ENCODE measurements at regions of chr1 and their contacts with region 1.

Region 1: GRCh38 chr1:205523891-205524793 is 19.7 kb downstream of the CDK18 start:
- DNase-seq: peak; percentile 77 to 88
- ATAC-seq: peak; percentile 72 to 83 (median 79)
- H3K4me3 ChIP-seq: no peak overlapping the region
- H3K27ac ChIP-seq: no peak overlapping the region
- H3K4me1 ChIP-seq: no peaks in the 10 kb centered on the region
- H3K27me3 ChIP-seq: peaks cover 0 to 10% (median 3%) of the 10 kb centered on the region in 3 donors
- CTCF ChIP-seq: peak; percentile 87

Region 2: DNA sequence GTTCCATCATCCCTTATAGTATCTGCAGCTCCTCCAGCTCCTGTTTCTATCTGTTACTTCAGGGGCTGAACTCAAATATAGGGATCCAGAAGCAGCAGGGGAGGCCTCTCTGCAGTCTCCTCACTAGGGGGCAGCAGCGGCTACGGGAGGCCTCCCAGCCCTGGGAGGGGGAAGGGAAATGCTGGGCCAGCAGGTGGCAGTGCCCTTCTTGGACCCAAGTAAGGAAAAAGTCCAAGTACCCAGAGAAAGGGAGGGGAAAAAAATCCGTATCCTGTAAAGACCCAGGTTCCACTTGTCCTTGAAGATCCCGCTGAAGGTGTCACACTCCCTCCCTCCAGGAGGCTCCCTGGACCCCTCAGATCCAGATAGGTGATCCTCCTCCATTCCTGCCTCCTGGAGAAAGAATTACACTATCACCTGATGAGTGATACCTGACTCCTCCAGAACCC is 188.5 kb before region 1 on chr1:
- intact Hi-C with region 1: loop called in 1 of 2 experiments (anchors 5 kb)
- DNase-seq: peak; percentile 63 to 86
- ATAC-seq: peak; percentile 72 to 87 (median 85)
- H3K4me3 ChIP-seq: no peak overlapping the region
- H3K27ac ChIP-seq: no peak overlapping the region
- H3K4me1 ChIP-seq: peaks cover 20% of the 10 kb centered on the region
- H3K27me3 ChIP-seq: no peaks in the 10 kb centered on the region
- CTCF ChIP-seq: peak; percentile 81

Region 3: GRCh38 chr1:205346956-205347576 is 177.1 kb before region 1 on chr1:
- intact Hi-C with region 1: loop called in 1 of 2 experiments (anchors 5 kb)
- DNase-seq: no peak
- ATAC-seq: no peak
- H3K4me3 ChIP-seq: no peak overlapping the region
- H3K27ac ChIP-seq: no peak overlapping the region
- H3K4me1 ChIP-seq: peaks cover 9% of the 10 kb centered on the region
- H3K27me3 ChIP-seq: peaks cover 0 to 46% (median 14%) of the 10 kb centered on the region in 3 donors
- CTCF ChIP-seq: no peak

Region 4: DNA sequence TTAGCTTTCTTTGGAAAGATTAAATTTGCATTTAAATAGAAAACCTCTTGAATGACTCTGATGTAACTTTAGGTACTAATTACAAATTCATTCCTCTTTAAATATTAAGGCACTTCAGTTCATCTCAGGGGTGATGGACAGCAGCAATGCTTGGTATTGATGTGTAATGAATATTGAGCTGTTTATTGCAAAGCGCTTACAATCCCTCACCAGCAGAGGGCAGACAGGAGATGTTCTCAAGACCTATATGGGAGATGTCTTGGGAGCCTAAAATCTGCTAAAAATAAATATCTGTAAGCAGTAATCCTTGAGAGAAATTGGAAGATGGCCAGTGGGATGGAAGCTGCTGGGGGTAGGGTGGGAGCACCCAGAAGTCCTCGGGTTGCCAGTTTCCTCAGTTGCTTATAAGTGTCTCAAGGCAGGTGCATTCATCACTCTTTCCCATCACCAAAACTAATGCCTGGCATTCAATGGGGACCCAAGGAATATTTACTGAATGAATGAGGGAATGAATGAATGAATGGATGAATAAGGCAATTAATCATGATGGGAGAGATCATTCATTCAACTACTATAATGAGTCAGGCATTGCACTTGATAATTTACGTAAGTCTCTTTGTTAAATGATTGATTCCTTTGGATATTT is 169.8 kb before region 1 on chr1:
- intact Hi-C with region 1: loop called (anchors 5 kb)
- DNase-seq: no peak
- ATAC-seq: peak in 3 of 4 donors; percentile 30 to 74 (median 69)
- H3K4me3 ChIP-seq: no peak overlapping the region
- H3K27ac ChIP-seq: no peak overlapping the region
- H3K4me1 ChIP-seq: no peaks in the 10 kb centered on the region
- H3K27me3 ChIP-seq: peaks cover 0 to 15% (median 0%) of the 10 kb centered on the region in 3 donors
- CTCF ChIP-seq: peak; percentile 88

Region 5: GRCh38 chr1:205396967-205397616 is 127.0 kb before region 1 on chr1:
- intact Hi-C with region 1: loop called (anchors 1 to 2 kb)
- DNase-seq: no peak
- ATAC-seq: peak; percentile 81 to 93 (median 87)
- H3K4me3 ChIP-seq: no peak overlapping the region
- H3K27ac ChIP-seq: no peak overlapping the region
- H3K4me1 ChIP-seq: no peaks in the 10 kb centered on the region
- H3K27me3 ChIP-seq: no peaks in the 10 kb centered on the region
- CTCF ChIP-seq: peak; percentile 75

Region 6: GRCh38 chr1:205485338-205486228 is 38.6 kb before region 1 on chr1:
- intact Hi-C with region 1: loop called (anchors 1 kb)
- DNase-seq: peak; percentile 39 to 65
- ATAC-seq: peak; percentile 80 to 89 (median 86)
- H3K4me3 ChIP-seq: no peak overlapping the region
- H3K27ac ChIP-seq: no peak overlapping the region
- H3K4me1 ChIP-seq: no peaks in the 10 kb centered on the region
- H3K27me3 ChIP-seq: peaks cover 0 to 27% (median 6%) of the 10 kb centered on the region in 3 donors
- CTCF ChIP-seq: peak; percentile 98

Region 7: GRCh38 chr1:205636717-205637116 is 112.6 kb after region 1 on chr1:
- intact Hi-C with region 1: no loop called
- DNase-seq: no peak
- ATAC-seq: no peak
- H3K4me3 ChIP-seq: no peak overlapping the region
- H3K27ac ChIP-seq: no peak overlapping the region
- H3K4me1 ChIP-seq: peaks cover 25% of the 10 kb centered on the region
- H3K27me3 ChIP-seq: no peaks in the 10 kb centered on the region
- CTCF ChIP-seq: no peak